ENCODE measurements at regions of chr17 and their contacts with region 1.

Region 1: DNA sequence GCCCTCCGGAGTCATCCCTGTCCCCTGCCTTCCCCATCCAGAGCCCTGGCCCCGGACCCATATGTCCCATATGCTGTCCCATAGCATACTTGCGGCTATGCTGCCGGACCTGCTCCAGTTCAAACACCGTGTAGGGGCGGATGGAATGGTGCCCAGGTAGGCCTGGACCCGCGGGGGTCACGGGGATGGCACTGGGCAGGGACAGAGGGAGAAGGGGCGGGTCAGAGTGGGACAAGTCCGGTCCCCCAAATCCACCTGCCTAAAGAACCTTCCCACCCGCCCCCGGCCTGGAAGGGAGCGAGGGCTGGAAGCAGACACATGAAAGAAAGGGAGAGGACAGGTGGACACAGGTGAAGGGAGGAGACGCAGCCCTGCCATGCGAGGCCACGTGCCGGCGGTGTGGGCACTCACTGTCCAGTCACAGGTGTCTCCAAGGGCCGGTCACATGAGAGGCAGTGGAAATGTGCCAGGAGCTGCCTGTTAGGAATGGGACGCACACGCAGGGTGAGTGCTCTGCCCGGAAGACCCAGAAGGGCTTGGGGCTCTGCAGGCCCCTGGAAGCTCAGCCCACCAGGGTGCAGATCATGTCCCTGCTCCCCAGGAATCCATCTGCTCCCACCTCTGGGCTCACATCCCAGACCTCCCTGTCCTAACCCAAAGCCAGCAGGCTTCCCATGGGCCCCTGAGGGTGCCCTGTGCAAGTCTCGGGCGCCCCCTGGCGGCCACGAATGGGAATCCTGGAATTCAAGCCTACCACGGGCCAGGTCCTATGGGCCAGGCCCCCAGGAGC is 14.0 kb downstream of the UBALD2 start:
- DNase-seq: peak; percentile 89
- ATAC-seq: peak; percentile 82
- H3K4me3 Mint-ChIP-seq: no peak overlapping the region
- H3K27ac Mint-ChIP-seq: peak overlapping the region; percentile 61
- H3K4me1 Mint-ChIP-seq: peaks cover 23% of the 10 kb centered on the region
- H3K27me3 Mint-ChIP-seq: no peaks in the 10 kb centered on the region

Region 2: GRCh38 chr17:76103274-76104139 is 175.6 kb before region 1 on chr17 and contains the start of gene EXOC7:
- CTCF ChIA-PET with region 1: interaction called, 17 read pairs
- POLR2A ChIA-PET with region 1: interaction called, 6 read pairs
- DNase-seq: peak; percentile 94
- ATAC-seq: peak; percentile 90
- H3K4me3 Mint-ChIP-seq: peak within 1 kb of the TSS; percentile 97
- H3K27ac Mint-ChIP-seq: peak within 1 kb of the TSS; percentile 98
- H3K4me1 Mint-ChIP-seq: peaks cover 30% of the 10 kb centered on the region
- H3K27me3 Mint-ChIP-seq: no peaks in the 10 kb centered on the region
- total RNA-seq, gene EXOC7: 126 to 129 TPM

Region 3: DNA sequence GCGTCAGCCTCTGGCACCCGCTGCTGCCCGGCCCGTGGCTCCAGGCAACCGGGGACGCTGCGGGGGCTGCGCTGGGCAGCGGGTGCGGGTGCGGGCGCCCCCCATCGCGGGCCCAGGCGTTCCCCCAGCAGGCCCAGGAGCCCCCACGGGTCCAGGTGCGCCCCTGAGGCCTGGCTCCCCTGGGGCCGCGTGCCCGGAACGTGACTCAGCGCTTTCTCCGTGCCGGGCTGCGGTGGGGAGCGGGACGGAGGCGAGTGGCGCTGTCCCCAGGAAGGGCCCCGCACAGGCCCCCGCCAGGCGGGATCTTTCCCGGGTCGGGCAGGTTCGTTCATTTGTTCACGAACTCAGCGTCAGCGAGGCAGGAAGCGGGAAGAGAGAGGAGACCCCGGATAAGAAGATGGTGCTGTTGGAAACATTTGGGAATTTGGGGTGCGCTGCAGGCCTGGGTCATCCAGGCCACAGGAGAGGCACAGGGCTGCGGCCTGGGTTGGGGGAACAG is 157.2 kb before region 1 on chr17:
- CTCF ChIA-PET with region 1: interaction called, 222 read pairs
- POLR2A ChIA-PET with region 1: interaction called, 163 read pairs
- DNase-seq: no peak
- ATAC-seq: peak; percentile 31
- H3K4me3 Mint-ChIP-seq: peak overlapping the region; percentile 26
- H3K27ac Mint-ChIP-seq: peak overlapping the region; percentile 73
- H3K4me1 Mint-ChIP-seq: peaks cover 45% of the 10 kb centered on the region
- H3K27me3 Mint-ChIP-seq: no peaks in the 10 kb centered on the region

Region 4: DNA sequence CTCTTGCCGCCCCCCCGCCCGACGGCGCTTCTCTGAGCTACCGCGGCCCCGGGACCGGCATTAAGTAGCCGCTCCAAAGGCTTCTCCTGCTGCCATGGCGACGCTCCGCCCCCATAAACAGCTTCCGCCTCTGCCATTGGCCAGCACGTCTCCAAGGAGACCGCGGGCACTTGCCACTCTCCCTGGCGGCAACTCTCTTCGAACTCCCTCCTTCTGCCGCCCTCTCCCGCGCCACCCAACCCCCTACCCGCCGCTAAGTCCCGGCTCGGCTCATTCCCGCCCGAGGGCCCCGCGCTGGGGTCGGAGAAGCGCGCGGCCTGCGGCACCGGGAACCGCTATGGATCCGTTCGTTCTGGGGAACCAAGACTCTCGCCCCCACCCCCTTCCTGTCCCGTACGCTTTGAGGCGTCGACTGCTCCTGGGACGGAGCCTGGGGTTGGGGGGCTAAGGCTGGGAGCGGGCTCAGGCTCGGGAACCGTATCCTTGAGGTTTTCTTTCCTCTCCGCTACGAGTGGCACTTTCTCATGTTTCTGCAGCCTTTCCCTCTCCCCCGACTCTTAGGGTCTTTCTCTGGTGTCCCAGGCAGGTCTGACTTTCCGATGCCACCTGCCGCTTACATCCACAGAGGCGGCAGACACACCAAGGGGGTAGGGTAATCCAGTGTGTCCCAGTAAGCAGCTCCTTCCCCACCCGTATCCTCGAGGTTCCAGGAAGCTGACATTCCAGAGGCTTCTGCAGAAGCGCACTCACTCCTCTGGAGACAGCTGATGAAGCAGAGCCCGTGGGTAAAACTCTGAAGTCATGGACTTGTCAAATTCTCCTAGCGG is 137.7 kb before region 1 on chr17 and contains the start of gene FOXJ1:
- CTCF ChIA-PET with region 1: interaction called, 38 read pairs
- POLR2A ChIA-PET with region 1: interaction called, 100 read pairs
- DNase-seq: peak; percentile 94
- ATAC-seq: peak; percentile 55
- H3K4me3 Mint-ChIP-seq: peak within 1 kb of the TSS; percentile 76
- H3K27ac Mint-ChIP-seq: peak within 1 kb of the TSS; percentile 97
- H3K4me1 Mint-ChIP-seq: peaks cover 72% of the 10 kb centered on the region
- H3K27me3 Mint-ChIP-seq: no peaks in the 10 kb centered on the region
- total RNA-seq, gene FOXJ1: 8.7 to 9.1 TPM

Region 5: GRCh38 chr17:76191896-76192295 is 87.3 kb before region 1 on chr17:
- CTCF ChIA-PET with region 1: interaction called, 20 read pairs
- POLR2A ChIA-PET with region 1: interaction called, 722 read pairs
- DNase-seq: peak; percentile 78
- ATAC-seq: peak; percentile 85
- H3K4me3 Mint-ChIP-seq: peak overlapping the region; percentile 73
- H3K27ac Mint-ChIP-seq: peak overlapping the region; percentile 97
- H3K4me1 Mint-ChIP-seq: peaks cover 89% of the 10 kb centered on the region
- H3K27me3 Mint-ChIP-seq: no peaks in the 10 kb centered on the region

Region 6: DNA sequence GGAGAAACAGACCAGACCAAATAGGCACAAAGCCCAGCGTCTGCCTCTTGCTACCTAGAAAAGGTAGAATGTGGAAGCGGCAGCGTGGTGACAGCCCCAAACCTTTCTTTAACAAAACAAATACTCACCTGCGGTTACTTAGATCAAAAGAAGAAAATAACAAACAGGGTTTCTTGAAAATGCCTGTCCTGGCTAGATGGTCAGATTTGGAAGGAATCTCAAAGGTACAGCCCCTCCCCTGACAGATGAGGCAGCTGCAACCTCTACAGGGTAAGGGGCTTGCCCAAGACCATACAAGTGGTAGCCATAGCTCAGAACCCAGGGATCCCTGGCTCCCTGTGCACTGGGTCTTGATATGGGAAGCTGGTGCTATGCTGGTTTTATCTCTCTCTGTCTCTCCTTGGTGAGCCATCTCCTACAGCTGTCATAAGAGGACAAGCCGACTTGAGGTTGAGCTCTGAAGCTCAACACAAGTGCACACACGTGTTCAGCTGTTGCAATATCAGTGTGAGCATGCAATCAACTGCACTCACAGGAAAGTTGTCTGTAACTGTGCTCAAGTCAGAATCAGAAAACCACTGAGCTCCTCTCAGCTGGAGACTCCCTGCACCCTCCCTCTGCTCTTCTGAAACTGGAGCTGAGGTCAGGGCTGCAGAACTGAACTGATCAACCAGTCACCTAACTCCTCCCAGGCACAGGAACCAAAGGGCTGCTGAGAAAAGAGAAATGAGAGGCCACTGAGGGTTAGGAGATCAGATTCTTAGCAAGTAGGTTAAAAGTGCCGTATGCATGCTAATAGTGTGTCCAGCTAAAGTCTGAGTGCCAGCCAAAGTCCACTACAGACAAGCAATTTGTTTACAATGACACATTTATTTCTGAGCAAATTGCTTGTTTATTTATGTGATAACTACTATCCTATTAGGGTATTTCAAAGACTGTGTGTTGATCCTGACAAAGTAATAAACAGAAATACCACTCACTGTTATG is 32.8 kb before region 1 on chr17:
- CTCF ChIA-PET with region 1: interaction called, 22 read pairs
- POLR2A ChIA-PET with region 1: interaction called, 807 read pairs
- DNase-seq: peak; percentile 91
- ATAC-seq: peak; percentile 97
- H3K4me3 Mint-ChIP-seq: peak overlapping the region; percentile 62
- H3K27ac Mint-ChIP-seq: peak overlapping the region; percentile 91
- H3K4me1 Mint-ChIP-seq: peaks cover 84% of the 10 kb centered on the region
- H3K27me3 Mint-ChIP-seq: no peaks in the 10 kb centered on the region

Region 7: GRCh38 chr17:76296186-76296585 is 17.0 kb after region 1 on chr17:
- CTCF ChIA-PET with region 1: interaction called, 25 read pairs
- POLR2A ChIA-PET with region 1: no interaction called
- DNase-seq: no peak
- ATAC-seq: no peak
- H3K4me3 Mint-ChIP-seq: no peak overlapping the region
- H3K27ac Mint-ChIP-seq: no peak overlapping the region
- H3K4me1 Mint-ChIP-seq: peaks cover 4% of the 10 kb centered on the region
- H3K27me3 Mint-ChIP-seq: no peaks in the 10 kb centered on the region

Measured in activated CD8-positive, alpha-beta T cell treated with anti-CD3 and anti-CD28 coated beads, Interleukin-2, amount 10 ng/mL, durations not matched to agents 7 days and 5 days (primary cell).